GM10248 (cell line): ENCODE measurements at regions of chr7 and their contacts with region 1.

Region 1: DNA sequence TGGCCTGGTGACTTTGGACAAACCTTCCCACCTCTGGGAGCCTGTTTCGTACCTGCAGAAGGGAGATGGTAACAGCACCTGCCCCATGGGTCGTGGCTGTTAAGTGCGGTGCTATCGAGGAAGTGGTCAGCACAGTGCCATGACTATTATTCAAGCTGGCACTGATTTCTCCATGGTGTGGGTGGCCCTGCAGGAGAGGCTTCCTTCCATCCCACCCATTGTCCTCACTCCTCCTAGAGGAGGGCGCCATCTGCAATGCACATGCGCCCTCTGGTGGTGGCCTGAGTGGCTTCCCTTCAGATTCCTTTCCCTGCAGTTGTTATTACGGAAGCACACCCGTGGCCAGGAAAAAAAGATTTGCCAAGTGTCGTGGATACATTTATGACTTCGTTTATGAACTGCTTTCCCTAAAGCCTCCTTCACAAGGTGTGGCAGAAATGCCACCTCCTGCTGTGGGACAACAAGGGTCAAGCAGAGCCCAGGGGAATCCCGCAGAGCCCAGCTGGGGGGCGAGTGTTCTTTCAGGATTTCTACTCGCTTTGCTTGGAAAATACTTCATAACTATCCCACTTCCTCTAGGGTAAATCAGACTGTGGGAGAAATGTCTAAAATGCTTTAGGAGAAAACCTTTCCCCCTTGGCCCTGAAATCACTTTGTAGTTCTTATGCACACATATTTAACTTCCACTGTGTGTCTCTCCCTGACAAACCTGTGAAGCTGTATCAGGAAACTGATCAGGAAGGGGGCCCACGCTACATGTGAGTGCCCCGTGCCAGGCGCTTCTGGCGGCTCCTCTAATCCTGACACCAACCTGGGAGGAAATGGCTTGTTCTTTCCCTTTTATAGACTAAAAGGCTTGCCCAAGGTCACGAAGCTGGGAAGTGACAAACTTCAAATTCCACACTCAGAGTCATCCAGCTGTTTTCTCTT is 98.0 kb upstream of the ANLN start:
- DNase-seq: peak; percentile 75
- CTCF ChIP-seq: peak; percentile 98

Region 2: GRCh38 chr7:35985126-35985754 is 306.4 kb before region 1 on chr7:
- CTCF ChIA-PET with region 1: interaction called, 129 read pairs
- POLR2A ChIA-PET with region 1: no interaction called
- DNase-seq: peak; percentile 83
- CTCF ChIP-seq: peak; percentile 89

Region 3: DNA sequence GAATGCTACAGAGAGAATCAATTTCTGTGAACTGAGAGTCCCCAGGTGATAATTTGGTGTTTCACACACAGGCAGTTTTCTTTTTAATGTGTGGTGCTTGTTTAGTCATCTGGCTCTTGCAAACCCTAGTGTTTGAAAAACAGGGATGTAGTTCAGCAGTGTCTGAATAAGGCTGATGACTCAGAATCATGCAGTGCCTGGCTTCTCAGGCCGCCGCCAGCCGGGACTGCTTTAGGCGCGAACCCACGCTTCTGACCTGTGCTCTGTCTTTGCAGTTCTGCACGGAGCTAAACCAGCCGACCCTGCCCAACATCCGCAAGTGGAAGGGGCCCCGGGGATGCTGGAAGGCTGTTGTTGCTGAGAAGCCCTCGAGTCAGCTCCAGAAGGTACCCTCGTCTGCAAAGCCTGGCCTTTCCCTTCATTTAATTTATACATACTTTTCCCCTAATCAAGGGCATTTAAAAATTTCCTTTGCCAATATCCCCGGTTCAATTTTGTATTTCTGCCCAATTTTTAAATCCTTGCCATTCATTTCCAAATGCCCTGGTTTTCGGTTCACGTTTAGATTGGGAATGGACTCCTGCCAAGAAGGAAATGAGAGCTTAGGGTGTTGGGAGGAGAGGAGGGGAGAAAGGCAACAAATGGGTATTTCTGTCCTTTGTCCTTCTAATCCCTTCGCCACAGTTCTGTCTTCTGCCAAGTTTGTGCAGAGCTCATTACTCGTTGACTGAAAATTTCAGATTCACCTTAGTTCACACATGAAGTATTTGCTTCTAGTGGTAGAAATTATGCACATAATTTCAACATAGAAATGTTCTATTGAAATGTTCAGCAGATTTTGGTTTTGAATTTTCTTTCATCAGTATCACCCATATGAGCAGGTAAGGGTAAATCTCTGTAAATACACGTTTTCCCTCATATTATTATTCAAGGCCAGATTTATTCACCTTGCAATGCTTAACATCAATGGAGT is 10.5 kb before region 1 on chr7:
- CTCF ChIA-PET with region 1: interaction called, 11 read pairs
- POLR2A ChIA-PET with region 1: no interaction called
- DNase-seq: peak; percentile 43
- CTCF ChIP-seq: no peak

Region 4: DNA sequence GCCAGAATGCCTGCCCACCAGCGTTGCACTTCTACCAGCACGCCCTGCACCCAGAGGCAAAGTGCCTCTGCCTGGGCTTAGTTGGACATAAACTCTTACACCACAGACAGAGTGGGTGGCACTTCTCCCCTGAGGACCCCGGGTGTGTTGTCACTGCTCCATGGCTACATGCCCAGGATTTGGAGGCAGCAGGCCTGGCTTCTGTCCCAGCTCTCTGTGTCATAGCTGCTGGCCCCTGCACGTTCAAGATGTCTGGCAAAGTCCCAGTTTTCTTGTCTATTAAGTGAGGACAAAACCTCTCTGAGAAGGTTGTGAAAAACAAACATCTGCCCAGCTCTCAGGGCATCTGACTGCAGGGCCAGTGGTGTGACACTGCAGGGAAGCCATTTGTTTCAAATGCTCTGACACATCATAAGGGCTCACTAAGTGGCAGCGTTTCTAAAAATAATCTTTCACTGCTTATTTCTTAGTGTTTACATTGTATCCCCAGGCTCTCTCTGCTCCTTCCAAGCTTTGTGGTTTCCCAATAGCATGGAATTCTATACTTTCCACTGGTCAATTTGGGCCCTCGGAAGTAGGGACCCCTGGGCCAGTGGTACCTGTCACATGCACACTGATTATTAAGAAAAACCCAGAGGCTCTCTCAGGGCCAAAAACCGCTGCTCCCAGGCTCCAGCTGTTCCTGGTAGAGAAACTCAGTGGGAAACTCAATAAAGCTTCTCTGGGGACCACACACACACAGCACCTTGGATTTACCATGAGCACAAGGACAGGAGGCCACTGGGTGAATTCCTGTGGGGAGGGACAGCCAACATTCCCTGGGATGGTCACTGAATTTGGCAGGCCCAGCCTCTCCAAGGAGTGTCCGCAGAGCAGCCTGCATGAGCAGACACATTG is 11.8 kb after region 1 on chr7:
- CTCF ChIA-PET with region 1: interaction called, 11 read pairs
- POLR2A ChIA-PET with region 1: no interaction called
- DNase-seq: no peak
- CTCF ChIP-seq: no peak